ENCODE measurements at regions of chrX and their contacts with region 1.

Region 1: DNA sequence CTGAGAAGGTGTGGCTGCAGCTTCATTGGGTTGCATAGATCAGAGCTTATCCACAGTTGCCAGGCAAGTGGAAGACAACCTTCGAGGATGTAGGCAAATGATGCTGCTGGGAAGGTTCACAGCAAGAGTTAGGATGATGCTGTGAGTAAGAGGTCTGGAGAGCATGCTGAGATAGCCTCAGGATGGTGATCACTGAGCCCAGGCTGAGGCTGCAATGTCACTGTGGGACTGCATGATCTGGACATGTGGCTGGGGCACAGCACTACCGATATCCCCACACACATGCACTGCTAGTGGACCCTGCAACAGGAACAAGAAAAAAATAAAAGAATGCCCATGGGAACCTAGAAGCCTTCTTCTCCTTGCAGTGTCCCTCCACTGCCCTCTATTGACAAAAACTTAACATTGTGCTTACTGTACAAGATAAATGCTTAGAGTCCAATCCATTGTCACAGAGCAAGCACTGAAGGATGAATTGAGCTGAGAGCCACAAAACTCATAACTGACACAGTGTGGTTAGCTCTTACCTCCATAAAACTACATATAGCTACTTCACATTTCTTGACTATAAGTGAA is 105.6 kb downstream of the CNKSR2 start:
- DNase-seq: peak; percentile 14
- ATAC-seq: peak; percentile 86
- H3K4me3 Mint-ChIP-seq: no peak overlapping the region
- H3K27ac Mint-ChIP-seq: no peak overlapping the region
- H3K4me1 Mint-ChIP-seq: peaks cover 4% of the 10 kb centered on the region
- H3K27me3 Mint-ChIP-seq: no peaks in the 10 kb centered on the region
- CTCF ChIP-seq: no peak

Region 2: DNA sequence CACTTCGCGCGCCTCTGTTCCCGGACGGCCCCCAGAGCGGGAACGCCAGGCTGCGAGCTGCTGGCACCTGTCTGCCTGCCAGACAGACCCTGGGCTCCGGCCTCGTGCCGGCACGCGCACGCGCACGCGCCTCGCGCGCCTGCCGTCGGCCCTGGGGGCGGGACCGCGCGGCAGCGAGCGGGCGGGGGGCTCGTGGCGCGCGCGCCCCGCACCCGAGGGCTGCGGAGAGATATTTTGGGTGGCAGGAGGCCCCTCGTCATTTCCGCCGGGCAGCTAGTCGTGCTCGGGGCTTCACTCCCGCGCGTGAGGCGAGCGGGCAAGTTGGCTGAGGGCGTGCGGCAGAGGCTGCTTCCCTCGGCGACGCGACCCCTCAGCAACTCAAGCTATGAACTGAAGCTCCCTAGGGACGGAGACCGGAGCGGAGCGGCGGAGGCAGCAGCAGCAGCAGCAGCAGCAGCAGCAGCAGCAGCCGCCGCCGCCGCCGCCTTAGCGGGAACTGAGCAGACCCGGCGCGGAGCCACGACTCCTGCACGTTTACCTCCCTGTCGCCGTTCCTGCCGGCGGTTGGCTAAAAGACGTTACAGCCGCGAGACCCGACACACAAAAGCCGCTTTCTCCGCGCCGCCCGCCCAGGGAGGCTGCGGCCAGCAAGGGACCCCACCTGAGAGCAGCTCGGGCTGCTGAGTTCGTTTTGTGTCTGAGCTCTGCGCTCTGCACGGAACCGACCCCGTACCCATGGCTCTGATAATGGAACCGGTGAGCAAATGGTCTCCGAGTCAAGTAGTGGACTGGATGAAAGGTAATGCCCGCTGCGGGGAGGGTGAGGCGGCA is 105.4 kb before region 1 on chrX and contains the start of gene CNKSR2:
- CTCF ChIA-PET with region 1: no interaction called
- POLR2A ChIA-PET with region 1: interaction called, 3 read pairs
- intact Hi-C with region 1: loop called (anchors 2 kb)
- DNase-seq: peak; percentile 74
- ATAC-seq: peak; percentile 77
- H3K4me3 Mint-ChIP-seq: peak within 1 kb of the TSS; percentile 92
- H3K27ac Mint-ChIP-seq: peak within 1 kb of the TSS; percentile 86
- H3K4me1 Mint-ChIP-seq: peaks cover 30% of the 10 kb centered on the region
- H3K27me3 Mint-ChIP-seq: no peaks in the 10 kb centered on the region
- CTCF ChIP-seq: no peak
- total RNA-seq, gene CNKSR2: 15.6 and 15.7 TPM in 2 replicates

Region 3: DNA sequence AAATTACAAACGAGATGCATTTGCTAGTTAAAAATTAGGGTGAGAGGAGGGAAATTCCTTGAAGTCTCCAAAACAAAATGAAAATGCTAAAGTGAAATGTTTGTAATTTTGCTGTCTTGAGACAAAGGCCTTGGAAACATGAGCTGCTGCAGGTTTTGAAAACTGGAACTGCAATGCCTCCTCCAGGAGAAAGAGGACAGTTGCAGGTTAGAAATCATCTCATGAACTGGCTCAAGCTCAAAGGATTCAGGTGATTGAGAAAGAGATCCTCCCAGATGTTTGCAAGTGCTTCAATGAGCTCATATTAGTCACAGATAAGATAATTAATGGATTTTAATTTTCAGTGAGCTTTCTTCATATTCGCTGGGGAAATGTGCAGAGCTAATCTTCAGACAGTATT is 245.7 kb after region 1 on chrX:
- CTCF ChIA-PET with region 1: interaction called, 10 read pairs
- POLR2A ChIA-PET with region 1: no interaction called
- intact Hi-C with region 1: no loop called
- DNase-seq: no peak
- ATAC-seq: no peak
- H3K4me3 Mint-ChIP-seq: no peak overlapping the region
- H3K27ac Mint-ChIP-seq: no peak overlapping the region
- H3K4me1 Mint-ChIP-seq: no peaks in the 10 kb centered on the region
- H3K27me3 Mint-ChIP-seq: no peaks in the 10 kb centered on the region
- CTCF ChIP-seq: no peak

Region 4: GRCh38 chrX:21745756-21746155 is 266.0 kb after region 1 on chrX:
- CTCF ChIA-PET with region 1: interaction called, 3 read pairs
- POLR2A ChIA-PET with region 1: no interaction called
- intact Hi-C with region 1: loop called (anchors 2 kb)
- DNase-seq: peak; percentile 13
- ATAC-seq: no peak
- H3K4me3 Mint-ChIP-seq: no peak overlapping the region
- H3K27ac Mint-ChIP-seq: no peak overlapping the region
- H3K4me1 Mint-ChIP-seq: no peaks in the 10 kb centered on the region
- H3K27me3 Mint-ChIP-seq: peaks cover 3% of the 10 kb centered on the region
- CTCF ChIP-seq: no peak